ENCODE measurements at regions of chrX and their contacts with region 1.

Region 1: DNA sequence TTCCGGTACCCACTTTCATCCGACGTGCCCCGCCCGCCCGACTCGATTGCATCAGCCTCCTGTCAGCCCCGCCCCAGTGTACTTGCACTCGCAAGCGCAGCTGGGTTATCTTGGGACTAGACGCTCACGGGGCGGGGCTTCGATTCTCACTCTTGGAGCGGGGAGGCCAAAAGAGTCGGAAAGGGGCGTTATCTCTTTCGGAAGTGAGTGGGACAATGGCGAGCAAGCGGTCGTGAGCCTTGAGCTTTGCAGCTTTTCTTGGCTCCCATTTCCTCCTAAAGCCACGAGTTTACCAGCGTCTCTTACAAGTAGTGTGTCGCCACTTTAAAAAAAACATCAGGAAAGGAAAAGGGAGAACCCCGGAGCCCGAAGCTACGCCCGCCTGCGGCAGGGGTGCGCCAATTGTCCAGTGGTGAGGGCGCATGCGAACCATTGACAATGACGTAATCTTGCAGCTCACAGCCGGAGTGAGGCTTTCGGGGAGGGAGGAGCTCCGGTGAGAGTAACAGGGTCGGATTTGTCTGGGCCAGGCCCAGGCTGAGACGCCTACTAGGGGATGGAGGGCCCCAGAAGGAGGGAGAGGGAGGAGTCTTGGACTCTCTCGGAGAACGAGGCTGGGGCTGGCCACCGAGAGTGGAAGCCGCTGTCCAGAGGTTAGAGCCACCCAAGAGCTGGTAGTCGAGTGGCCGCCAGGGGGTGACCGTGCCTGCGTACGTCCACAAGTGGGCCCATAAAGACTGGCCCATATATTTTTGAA is 109.5 kb downstream of the GNL3L start:
- DNase-seq: peak; percentile 76
- ATAC-seq: peak; percentile 88
- H3K4me3 Mint-ChIP-seq: peak overlapping the region; percentile 97
- H3K27ac Mint-ChIP-seq: peak overlapping the region; percentile 100
- H3K4me1 Mint-ChIP-seq: peaks cover 6% of the 10 kb centered on the region
- H3K27me3 Mint-ChIP-seq: no peaks in the 10 kb centered on the region
- CTCF ChIP-seq: no peak

Region 2: GRCh38 chrX:53654376-53654775 is 985.1 kb before region 1 on chrX:
- CTCF ChIA-PET with region 1: no interaction called
- POLR2A ChIA-PET with region 1: no interaction called
- intact Hi-C with region 1: no loop called
- DNase-seq: no peak
- ATAC-seq: no peak
- H3K4me3 Mint-ChIP-seq: no peak overlapping the region
- H3K27ac Mint-ChIP-seq: no peak overlapping the region
- H3K4me1 Mint-ChIP-seq: peaks cover 6% of the 10 kb centered on the region
- H3K27me3 Mint-ChIP-seq: no peaks in the 10 kb centered on the region
- CTCF ChIP-seq: no peak

Region 3: GRCh38 chrX:53683556-53684414 is 955.7 kb before region 1 on chrX:
- CTCF ChIA-PET with region 1: no interaction called
- POLR2A ChIA-PET with region 1: interaction called, 3 read pairs
- intact Hi-C with region 1: loop called (anchors 5 kb)
- DNase-seq: peak; percentile 69
- ATAC-seq: peak; percentile 68
- H3K4me3 Mint-ChIP-seq: peak overlapping the region; percentile 91
- H3K27ac Mint-ChIP-seq: peak overlapping the region; percentile 97
- H3K4me1 Mint-ChIP-seq: peaks cover 40% of the 10 kb centered on the region
- H3K27me3 Mint-ChIP-seq: no peaks in the 10 kb centered on the region
- CTCF ChIP-seq: no peak

Region 4: DNA sequence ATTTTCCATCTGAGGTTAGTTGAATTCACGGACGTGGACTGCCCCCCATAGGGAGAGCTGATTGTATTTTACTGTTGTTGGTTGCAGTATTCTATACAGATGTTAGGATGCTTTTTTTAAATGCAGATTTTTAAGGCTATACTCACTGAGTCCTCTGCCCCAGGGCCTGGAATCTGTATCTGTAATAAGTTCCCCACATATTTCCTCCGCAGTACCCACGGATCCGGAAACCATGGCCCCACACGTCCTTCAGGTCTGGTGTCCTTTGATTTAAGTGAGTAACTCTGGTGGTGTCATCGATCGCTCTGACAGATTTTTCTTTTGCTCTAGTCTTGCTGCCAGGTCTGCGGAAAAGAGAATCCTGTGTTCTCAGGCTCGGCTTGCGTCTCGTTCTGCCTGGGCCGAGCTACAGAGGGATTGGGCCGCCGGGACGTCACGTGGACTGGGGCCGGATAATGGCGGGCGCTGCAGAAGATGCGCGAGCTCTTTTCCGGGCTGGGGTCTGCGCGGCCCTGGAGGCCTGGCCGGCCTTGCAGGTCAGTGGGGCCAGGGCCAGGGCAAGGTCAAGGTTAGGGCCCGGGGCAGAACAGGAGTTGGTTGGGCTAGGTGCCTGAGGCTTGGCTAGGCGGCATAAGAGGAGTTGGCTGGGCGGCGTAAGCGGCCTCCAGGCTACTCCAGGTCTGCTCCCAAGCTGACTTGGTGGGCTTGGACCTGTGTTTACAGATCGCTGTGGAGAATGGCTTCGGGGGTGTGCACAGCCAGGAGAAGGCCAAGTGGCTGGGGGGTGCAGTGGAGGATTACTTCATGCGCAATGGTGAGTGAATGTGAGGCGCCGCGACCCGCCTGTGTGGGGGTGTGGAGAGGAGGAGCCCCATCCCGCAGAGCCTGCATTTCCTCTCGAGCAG is 199.3 kb before region 1 on chrX and contains the start of gene TSR2:
- CTCF ChIA-PET with region 1: no interaction called
- POLR2A ChIA-PET with region 1: interaction called, 7 read pairs
- intact Hi-C with region 1: loop called (anchors 1 kb)
- DNase-seq: peak; percentile 59
- ATAC-seq: peak; percentile 98
- H3K4me3 Mint-ChIP-seq: peak within 1 kb of the TSS; percentile 91
- H3K27ac Mint-ChIP-seq: peak within 1 kb of the TSS; percentile 76
- H3K4me1 Mint-ChIP-seq: peaks cover 29% of the 10 kb centered on the region
- H3K27me3 Mint-ChIP-seq: no peaks in the 10 kb centered on the region
- CTCF ChIP-seq: no peak
- total RNA-seq, gene TSR2: 35.9 and 42.4 TPM in 2 replicates

Region 5: GRCh38 chrX:54570332-54570731 is 69.2 kb before region 1 on chrX:
- CTCF ChIA-PET with region 1: no interaction called
- POLR2A ChIA-PET with region 1: no interaction called
- intact Hi-C with region 1: loop called (anchors 10 kb)
- DNase-seq: no peak
- ATAC-seq: no peak
- H3K4me3 Mint-ChIP-seq: no peak overlapping the region
- H3K27ac Mint-ChIP-seq: no peak overlapping the region
- H3K4me1 Mint-ChIP-seq: no peaks in the 10 kb centered on the region
- H3K27me3 Mint-ChIP-seq: no peaks in the 10 kb centered on the region
- CTCF ChIP-seq: no peak

Region 6: GRCh38 chrX:54615109-54615508 is 24.4 kb before region 1 on chrX:
- CTCF ChIA-PET with region 1: no interaction called
- POLR2A ChIA-PET with region 1: no interaction called
- intact Hi-C with region 1: no loop called
- DNase-seq: no peak
- ATAC-seq: no peak
- H3K4me3 Mint-ChIP-seq: no peak overlapping the region
- H3K27ac Mint-ChIP-seq: no peak overlapping the region
- H3K4me1 Mint-ChIP-seq: no peaks in the 10 kb centered on the region
- H3K27me3 Mint-ChIP-seq: no peaks in the 10 kb centered on the region
- CTCF ChIP-seq: no peak

Region 7: DNA sequence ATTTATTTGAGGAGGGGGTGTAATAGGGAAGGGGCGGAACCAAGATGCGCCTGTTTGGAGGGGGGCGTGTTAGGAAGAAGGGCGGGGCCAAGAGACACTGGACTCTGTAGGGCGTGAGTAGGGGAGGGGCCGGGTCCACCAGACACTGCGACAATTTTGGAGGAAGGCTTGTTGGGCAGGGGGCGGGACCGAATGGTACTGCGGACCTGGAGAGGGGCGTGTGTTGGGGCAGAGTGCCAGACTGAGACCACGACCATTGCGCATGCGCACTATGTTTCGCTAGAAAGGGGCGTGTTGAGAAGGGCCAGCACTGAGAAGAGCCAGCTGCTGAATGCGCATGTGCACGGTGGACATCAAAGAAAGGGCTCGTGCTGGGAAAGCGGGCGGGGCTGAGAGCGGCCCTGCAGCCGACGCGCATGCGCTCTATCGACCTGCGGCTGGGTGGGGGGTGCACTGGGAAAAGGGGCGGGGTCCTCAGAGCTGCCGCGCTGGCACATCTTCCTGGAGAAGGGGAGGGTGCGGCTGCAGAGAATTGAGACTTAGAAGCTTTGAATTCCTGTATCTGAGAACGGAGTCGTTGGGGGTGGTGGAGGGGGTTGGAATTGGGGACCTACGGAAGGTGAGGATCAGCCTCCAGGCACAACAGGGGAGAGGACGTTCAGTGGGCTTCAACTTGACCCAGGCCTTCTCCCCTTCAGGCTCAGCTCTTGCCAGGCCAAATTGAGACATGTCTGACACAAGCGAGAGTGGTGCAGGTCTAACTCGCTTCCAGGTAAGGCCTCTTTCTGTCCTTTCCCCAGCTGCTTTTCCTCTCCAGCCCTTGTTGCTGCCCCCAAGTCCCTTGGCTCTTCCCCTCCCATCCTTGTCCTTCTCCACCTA is 169.3 kb after region 1 on chrX:
- CTCF ChIA-PET with region 1: no interaction called
- POLR2A ChIA-PET with region 1: interaction called, 38 read pairs
- intact Hi-C with region 1: loop called (anchors 1 kb)
- DNase-seq: peak; percentile 73
- ATAC-seq: peak; percentile 96
- H3K4me3 Mint-ChIP-seq: peak overlapping the region; percentile 92
- H3K27ac Mint-ChIP-seq: peak overlapping the region; percentile 91
- H3K4me1 Mint-ChIP-seq: peaks cover 14% of the 10 kb centered on the region
- H3K27me3 Mint-ChIP-seq: no peaks in the 10 kb centered on the region
- CTCF ChIP-seq: no peak

Region 8: GRCh38 chrX:55057675-55058249 is 418.2 kb after region 1 on chrX:
- CTCF ChIA-PET with region 1: interaction called, 6 read pairs
- POLR2A ChIA-PET with region 1: interaction called, 5 read pairs
- intact Hi-C with region 1: loop called (anchors 1 kb)
- DNase-seq: no peak
- ATAC-seq: peak; percentile 54
- H3K4me3 Mint-ChIP-seq: peak overlapping the region; percentile 68
- H3K27ac Mint-ChIP-seq: no peak overlapping the region
- H3K4me1 Mint-ChIP-seq: peaks cover 11% of the 10 kb centered on the region
- H3K27me3 Mint-ChIP-seq: no peaks in the 10 kb centered on the region
- CTCF ChIP-seq: peak; percentile 18